Right ventricle myocardium inferior (tissue), 1 donor: ENCODE measurements at regions of chr19 and their contacts with region 1.

Region 1: GRCh38 chr19:41563854-41564514 is 12.0 kb upstream of the CEACAM21 start:
- DNase-seq: no peak
- ATAC-seq: no peak

Region 2: GRCh38 chr19:41206926-41207750 is 356.8 kb before region 1 on chr19:
- intact Hi-C with region 1: no loop called
- DNase-seq: peak; percentile 91
- ATAC-seq: peak; percentile 91

Region 3: GRCh38 chr19:41462497-41462896 is 101.5 kb before region 1 on chr19:
- intact Hi-C with region 1: no loop called
- DNase-seq: no peak
- ATAC-seq: no peak

Region 4: GRCh38 chr19:41545547-41545946 is 18.4 kb before region 1 on chr19:
- intact Hi-C with region 1: loop called (anchors 2 kb)
- DNase-seq: no peak
- ATAC-seq: peak; percentile 44